Caco-2 (cell line): ENCODE measurements at regions of chr15 and their contacts with region 1.

Region 1: GRCh38 chr15:33086507-33087121 is 107.9 kb downstream of the FMN1 start:
- DNase-seq: peak in 1 of 2 experiments; percentile 24
- H3K4me3 ChIP-seq: no peak overlapping the region
- H3K4me3 Mint-ChIP-seq: no peak overlapping the region
- H3K27ac Mint-ChIP-seq: no peak overlapping the region
- H3K4me1 ChIP-seq: peaks cover 12% of the 10 kb centered on the region
- H3K4me1 Mint-ChIP-seq: peaks cover 7% of the 10 kb centered on the region
- H3K27me3 ChIP-seq: no peaks in the 10 kb centered on the region
- H3K27me3 Mint-ChIP-seq: peaks cover 3% of the 10 kb centered on the region
- CTCF ChIP-seq: peak; percentile 51 to 64

Region 2: DNA sequence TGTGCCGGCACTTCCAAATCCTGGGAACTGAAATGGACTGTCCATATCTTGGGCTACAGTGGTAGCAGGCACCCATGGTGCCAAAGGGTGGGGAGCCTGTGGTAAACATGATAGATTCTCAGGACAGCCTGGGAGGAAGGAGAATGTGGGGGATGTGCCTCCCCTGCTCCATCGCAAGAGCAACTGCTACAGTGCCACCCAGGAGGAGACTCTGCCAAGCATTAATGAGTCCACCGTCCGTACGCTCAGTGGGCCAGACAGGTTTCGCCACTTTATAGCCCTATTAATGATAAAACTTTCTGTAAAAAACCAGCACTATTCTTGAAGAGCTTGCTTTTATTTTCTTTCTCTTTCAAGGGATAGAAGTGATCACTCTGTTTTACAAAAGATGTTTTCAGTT is 32.7 kb after region 1 on chr15:
- CTCF ChIA-PET with region 1: no interaction called
- POLR2A ChIA-PET with region 1: no interaction called
- intact Hi-C with region 1: no loop called
- DNase-seq: no peak
- H3K4me3 ChIP-seq: no peak overlapping the region
- H3K4me3 Mint-ChIP-seq: no peak overlapping the region
- H3K27ac Mint-ChIP-seq: no peak overlapping the region
- H3K4me1 ChIP-seq: no peaks in the 10 kb centered on the region
- H3K4me1 Mint-ChIP-seq: no peaks in the 10 kb centered on the region
- H3K27me3 ChIP-seq: no peaks in the 10 kb centered on the region
- H3K27me3 Mint-ChIP-seq: peaks cover 6% of the 10 kb centered on the region
- CTCF ChIP-seq: no peak

Region 3: DNA sequence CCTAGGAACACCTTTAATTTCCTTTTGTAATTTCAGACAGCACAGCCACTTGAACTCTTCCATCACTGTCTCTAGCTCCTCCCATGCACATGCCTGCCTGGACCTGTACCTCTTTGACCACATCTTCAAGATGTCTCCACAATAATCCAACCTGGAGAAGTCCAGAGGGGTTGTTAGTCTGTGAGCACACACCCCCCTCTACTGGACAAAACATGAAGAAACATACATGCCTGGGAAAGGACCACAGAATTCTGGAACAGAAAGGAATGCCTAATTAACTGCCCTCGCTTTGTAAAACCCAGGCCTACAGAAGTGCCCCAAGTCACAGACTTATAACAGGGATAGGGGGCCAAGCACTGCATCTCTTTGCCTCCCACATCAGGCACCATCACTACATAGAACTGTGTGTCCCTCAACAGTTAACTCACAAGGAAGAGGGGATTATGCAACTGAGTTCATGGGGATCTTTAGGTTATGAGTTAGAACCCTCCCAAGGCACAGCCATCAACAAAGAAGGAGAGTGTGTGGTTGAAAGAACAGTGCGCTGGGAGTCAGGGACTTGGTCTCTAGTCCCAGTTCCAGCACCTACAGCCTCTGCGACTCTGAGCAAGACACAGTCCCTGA is 46.2 kb after region 1 on chr15:
- CTCF ChIA-PET with region 1: interaction called, 12 read pairs
- POLR2A ChIA-PET with region 1: no interaction called
- intact Hi-C with region 1: loop called (anchors 1 kb)
- DNase-seq: peak; percentile 51 to 64
- H3K4me3 ChIP-seq: no peak overlapping the region
- H3K4me3 Mint-ChIP-seq: no peak overlapping the region
- H3K27ac Mint-ChIP-seq: no peak overlapping the region
- H3K4me1 ChIP-seq: no peaks in the 10 kb centered on the region
- H3K4me1 Mint-ChIP-seq: no peaks in the 10 kb centered on the region
- H3K27me3 ChIP-seq: no peaks in the 10 kb centered on the region
- H3K27me3 Mint-ChIP-seq: peaks cover 11% of the 10 kb centered on the region
- CTCF ChIP-seq: peak; percentile 70 to 78

Region 4: DNA sequence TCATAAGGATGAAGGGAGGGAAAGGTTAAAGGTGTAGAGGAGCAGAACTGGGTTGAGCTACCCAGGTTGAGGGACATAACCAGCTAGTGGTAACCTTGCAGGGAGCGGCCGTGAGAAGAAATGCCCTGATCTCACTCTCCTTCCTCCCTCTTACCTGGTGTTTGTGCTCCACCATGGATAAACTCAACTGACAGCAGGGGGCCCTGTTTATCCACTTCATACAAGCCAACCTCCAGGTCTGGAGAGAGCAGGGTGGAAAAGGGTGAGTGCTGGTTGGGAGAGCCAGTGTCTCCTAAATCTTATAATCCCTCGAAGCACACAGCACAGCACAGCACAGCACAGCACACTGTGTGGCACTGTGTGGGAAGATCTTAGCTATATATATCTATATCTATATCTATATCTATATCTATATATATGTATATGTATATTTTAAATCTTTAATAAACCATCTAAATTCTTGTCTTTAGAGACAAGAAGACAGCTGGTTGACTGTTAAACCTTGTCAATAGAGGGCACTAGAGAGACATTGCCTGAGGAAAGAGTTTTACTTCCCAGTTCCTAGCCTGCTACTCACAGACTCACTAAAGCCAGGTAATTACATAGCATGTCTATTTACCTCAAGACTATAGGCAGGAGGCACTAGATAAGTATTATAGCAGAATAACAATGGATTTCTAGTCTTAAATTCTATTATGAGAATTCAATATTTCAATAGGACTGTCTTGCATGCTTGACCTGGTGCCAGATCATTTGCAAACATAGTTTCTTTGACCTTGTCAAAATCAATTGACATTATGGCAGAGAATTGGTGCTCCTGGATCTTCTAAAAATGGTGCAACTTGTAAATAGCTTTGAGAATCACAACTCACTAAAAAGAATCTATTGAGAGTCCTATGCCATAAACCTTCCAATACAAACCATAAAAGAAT is 129.6 kb after region 1 on chr15:
- CTCF ChIA-PET with region 1: no interaction called
- POLR2A ChIA-PET with region 1: no interaction called
- intact Hi-C with region 1: loop called (anchors 5 kb)
- DNase-seq: peak in 1 of 2 experiments; percentile 35
- H3K4me3 ChIP-seq: no peak overlapping the region
- H3K4me3 Mint-ChIP-seq: no peak overlapping the region
- H3K27ac Mint-ChIP-seq: no peak overlapping the region
- H3K4me1 ChIP-seq: no peaks in the 10 kb centered on the region
- H3K4me1 Mint-ChIP-seq: no peaks in the 10 kb centered on the region
- H3K27me3 ChIP-seq: no peaks in the 10 kb centered on the region
- H3K27me3 Mint-ChIP-seq: no peaks in the 10 kb centered on the region
- CTCF ChIP-seq: peak; percentile 61 to 65

Region 5: GRCh38 chr15:33234014-33234461 is 147.4 kb after region 1 on chr15:
- CTCF ChIA-PET with region 1: no interaction called
- POLR2A ChIA-PET with region 1: no interaction called
- intact Hi-C with region 1: loop called (anchors 5 kb)
- DNase-seq: peak in 1 of 2 experiments; percentile 45
- H3K4me3 ChIP-seq: no peak overlapping the region
- H3K4me3 Mint-ChIP-seq: no peak overlapping the region
- H3K27ac Mint-ChIP-seq: no peak overlapping the region
- H3K4me1 ChIP-seq: no peaks in the 10 kb centered on the region
- H3K4me1 Mint-ChIP-seq: no peaks in the 10 kb centered on the region
- H3K27me3 ChIP-seq: no peaks in the 10 kb centered on the region
- H3K27me3 Mint-ChIP-seq: peaks cover 12% of the 10 kb centered on the region
- CTCF ChIP-seq: peak; percentile 50 to 64

Region 6: GRCh38 chr15:33700695-33701304 is 614.2 kb after region 1 on chr15:
- CTCF ChIA-PET with region 1: interaction called, 5 read pairs
- POLR2A ChIA-PET with region 1: no interaction called
- intact Hi-C with region 1: loop called (anchors 1 kb)
- DNase-seq: peak; percentile 69 to 72
- H3K4me3 ChIP-seq: no peak overlapping the region
- H3K4me3 Mint-ChIP-seq: no peak overlapping the region
- H3K27ac Mint-ChIP-seq: no peak overlapping the region
- H3K4me1 ChIP-seq: no peaks in the 10 kb centered on the region
- H3K4me1 Mint-ChIP-seq: no peaks in the 10 kb centered on the region
- H3K27me3 ChIP-seq: no peaks in the 10 kb centered on the region
- H3K27me3 Mint-ChIP-seq: peaks cover 9% of the 10 kb centered on the region
- CTCF ChIP-seq: peak; percentile 86 to 93